Endothelial cell of umbilical vein (primary cell): ENCODE measurements at regions of chr3 and their contacts with region 1.

Region 1: DNA sequence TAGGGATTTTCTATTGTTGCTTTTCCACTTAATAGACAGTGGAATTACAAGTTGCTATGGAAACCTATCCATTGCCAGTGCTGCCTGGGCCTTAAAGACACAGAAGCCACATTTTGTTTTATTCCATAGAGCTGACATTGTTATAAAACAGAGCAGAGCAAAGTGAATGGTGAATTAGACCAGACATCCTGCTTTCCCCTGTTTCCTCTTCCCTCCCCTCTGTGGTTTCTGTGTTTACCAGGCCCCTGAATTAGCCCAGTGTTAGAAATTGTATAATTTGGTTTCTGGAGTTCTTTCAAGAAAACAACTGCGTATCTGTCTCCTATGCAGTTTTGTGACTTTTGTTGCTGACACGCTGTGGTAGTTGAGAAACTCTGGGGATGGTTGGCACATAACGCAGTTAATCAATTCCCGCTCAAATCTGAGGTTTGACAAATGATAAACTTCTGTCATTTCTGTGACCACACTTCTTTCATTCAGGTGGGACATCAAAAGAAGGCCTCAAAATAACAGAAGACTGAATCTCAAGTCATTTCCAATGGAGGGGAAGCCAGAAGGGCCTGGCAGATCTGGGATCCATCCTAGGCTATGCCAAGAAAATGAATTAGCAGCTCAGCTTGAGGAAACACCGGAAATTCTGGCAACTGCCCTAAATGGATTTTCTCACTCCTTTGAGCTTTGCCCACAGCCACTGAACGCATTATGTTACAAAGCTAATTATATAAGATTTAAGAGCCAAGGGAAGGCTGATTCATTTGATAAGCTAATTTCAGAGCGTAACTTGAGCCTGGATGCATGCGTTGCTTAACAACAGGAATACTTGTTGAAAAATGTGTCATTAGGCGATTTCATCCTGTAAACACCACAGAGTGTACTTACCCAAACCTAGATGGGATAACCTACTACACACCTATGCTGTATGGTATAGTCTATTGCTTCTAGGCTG is 46.9 kb downstream of the NR1D2 start:
- DNase-seq: peak; percentile 98
- H3K4me3 ChIP-seq: no peak overlapping the region
- H3K27ac ChIP-seq: peak overlapping the region; percentile 65
- H3K4me1 ChIP-seq: peaks cover 21% of the 10 kb centered on the region
- H3K27me3 ChIP-seq: no peaks in the 10 kb centered on the region
- CTCF ChIP-seq: no peak
- POLR2A ChIP-seq: no peak

Region 2: DNA sequence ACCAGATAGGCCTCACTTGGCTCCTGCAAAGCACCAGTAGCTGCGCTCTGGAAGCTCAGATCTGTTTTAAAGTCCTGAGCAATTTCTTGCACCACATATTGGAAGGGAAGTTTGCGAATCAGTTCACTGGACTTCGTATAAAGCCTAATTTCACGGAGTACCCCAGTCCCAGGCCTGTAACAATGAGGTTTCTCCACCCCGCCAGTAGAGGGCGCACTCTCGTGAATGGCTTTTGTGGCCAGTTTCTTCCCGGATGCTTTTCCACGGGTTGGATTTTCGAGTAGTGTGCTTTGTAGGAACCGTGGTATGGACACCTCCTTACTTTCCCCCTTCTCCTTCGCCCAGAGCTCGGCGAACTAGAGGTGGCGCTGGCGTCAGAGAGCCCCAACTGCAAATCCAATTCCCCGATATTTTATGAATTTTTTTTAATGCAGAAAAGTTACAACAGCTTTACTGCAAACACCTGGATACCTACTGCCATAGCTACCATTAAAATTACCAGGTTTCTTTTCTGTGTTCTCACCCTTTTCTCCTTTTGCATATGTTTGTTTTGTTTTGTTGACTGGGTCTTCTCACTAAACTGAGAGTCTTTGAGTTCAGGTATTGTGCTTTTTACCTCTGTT is 1449.4 kb after region 1 on chr3:
- CTCF ChIA-PET with region 1: no interaction called
- POLR2A ChIA-PET with region 1: no interaction called
- dilution Hi-C with region 1: no loop called
- intact Hi-C with region 1: loop called (anchors 5 kb)
- DNase-seq: no peak
- H3K4me3 ChIP-seq: no peak overlapping the region
- H3K27ac ChIP-seq: no peak overlapping the region
- H3K4me1 ChIP-seq: peaks cover 10% of the 10 kb centered on the region
- H3K27me3 ChIP-seq: no peaks in the 10 kb centered on the region
- CTCF ChIP-seq: peak; percentile 60 to 69
- POLR2A ChIP-seq: no peak